ENCODE measurements at regions of chr1 and their contacts with region 1.

Region 1: DNA sequence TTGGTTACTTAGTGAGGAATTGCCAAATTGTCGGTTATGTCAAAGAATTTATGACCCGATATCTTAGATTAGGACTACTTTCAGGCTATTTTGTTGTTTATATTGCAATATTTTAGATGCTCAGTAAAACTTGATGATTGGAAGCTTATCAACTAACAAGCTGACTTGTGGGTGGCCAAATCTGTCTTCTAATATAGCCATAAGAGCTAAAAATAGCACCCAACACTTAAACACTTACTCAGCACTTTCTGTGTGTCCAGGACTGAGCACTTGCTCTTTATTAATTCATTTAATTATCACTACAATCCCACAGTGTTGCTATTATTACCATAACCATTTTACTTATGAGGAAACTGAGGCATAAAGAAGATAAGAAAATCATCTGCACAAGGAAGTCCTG is 50.4 kb downstream of the RWDD3 start:
- DNase-seq: no peak
- ATAC-seq: no peak
- H3K4me3 ChIP-seq: no peak overlapping the region
- H3K27ac ChIP-seq: no peak overlapping the region
- H3K4me1 ChIP-seq: no peaks in the 10 kb centered on the region
- H3K27me3 ChIP-seq: no peaks in the 10 kb centered on the region

Region 2: GRCh38 chr1:93864175-93864574 is 1420.2 kb before region 1 on chr1:
- intact Hi-C with region 1: no loop called
- DNase-seq: no peak
- ATAC-seq: no peak
- H3K4me3 ChIP-seq: no peak overlapping the region
- H3K27ac ChIP-seq: no peak overlapping the region
- H3K4me1 ChIP-seq: no peaks in the 10 kb centered on the region
- H3K27me3 ChIP-seq: no peaks in the 10 kb centered on the region

Region 3: DNA sequence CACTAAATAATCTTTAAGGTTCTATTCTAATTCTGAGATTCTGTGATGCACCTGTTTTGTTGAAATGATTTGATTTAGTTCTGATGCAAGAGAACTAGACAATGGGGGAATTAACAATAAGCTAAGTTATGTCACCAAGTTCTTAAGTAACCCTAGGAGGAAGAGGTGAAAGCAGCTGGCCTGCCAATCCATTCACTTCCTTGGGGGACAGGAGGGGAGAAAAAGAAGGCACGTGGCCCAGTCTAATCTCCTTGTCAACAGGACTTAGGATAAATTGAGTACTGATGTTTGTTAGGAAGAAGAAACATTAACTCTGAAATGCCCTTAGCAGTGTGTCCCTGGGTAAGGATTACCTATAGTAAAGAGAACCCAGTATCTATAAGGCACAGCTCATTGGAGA is 130.3 kb before region 1 on chr1:
- intact Hi-C with region 1: no loop called
- DNase-seq: no peak
- ATAC-seq: no peak
- H3K4me3 ChIP-seq: no peak overlapping the region
- H3K27ac ChIP-seq: no peak overlapping the region
- H3K4me1 ChIP-seq: no peaks in the 10 kb centered on the region
- H3K27me3 ChIP-seq: no peaks in the 10 kb centered on the region

Region 4: DNA sequence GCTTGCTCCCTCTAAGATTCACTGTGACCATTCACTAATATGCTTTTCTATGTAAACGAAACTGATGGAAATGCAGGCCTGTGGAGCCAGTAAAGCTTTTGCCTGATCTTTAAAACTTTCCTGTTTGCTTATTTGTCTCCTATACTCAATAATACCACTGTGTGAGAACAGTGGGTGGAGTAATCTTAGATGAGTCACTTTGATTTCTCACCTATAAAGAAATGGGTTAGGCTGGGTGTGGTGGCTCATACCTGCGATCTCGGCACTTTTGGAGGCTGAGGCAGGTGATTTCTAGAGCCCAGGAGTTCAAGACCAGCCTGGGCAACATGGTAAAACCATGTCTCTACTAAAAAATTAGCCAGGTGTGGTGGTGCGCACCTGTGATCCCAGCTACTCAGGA is 20.4 kb after region 1 on chr1:
- intact Hi-C with region 1: loop called in 1 of 2 experiments (anchors 2 kb)
- DNase-seq: no peak
- ATAC-seq: no peak
- H3K4me3 ChIP-seq: no peak overlapping the region
- H3K27ac ChIP-seq: no peak overlapping the region
- H3K4me1 ChIP-seq: no peaks in the 10 kb centered on the region
- H3K27me3 ChIP-seq: no peaks in the 10 kb centered on the region

Region 5: DNA sequence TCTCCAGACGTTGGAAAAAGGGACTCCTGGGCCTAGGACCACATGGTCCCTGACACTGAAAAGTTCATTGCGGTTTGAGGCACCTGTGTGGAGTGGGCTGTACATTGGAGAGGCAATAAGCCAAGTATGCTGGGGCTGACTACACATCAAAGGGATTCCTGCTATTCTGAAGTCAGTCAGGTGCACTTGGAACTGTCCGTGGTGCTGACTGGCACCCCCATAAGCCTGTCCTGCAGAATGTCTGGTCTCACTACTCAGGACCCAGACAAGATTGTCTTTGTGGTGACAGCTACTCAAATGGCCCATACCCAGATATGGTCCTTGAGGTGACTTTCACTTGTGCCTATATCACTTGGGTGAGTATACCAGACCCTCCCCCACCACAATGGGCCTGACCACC is 100.1 kb after region 1 on chr1:
- intact Hi-C with region 1: no loop called
- DNase-seq: no peak
- ATAC-seq: no peak
- H3K4me3 ChIP-seq: no peak overlapping the region
- H3K27ac ChIP-seq: no peak overlapping the region
- H3K4me1 ChIP-seq: no peaks in the 10 kb centered on the region
- H3K27me3 ChIP-seq: no peaks in the 10 kb centered on the region

Measured in aorta (tissue), 5 donors.